Dendritic cell treated with granulocyte-macrophage colony-stimulating factor and Interleukin-4, amounts not matched to agents 40 ng/mL and 50 ng/mL, for 4 days (primary cell): ENCODE measurements at regions of chr20 and their contacts with region 1.

Region 1: GRCh38 chr20:53699958-53700305 is 106.3 kb upstream of the ZNF217 start:
- H3K4me3 Mint-ChIP-seq: no peak overlapping the region
- H3K27ac Mint-ChIP-seq: peak overlapping the region; percentile 91
- H3K4me1 Mint-ChIP-seq: peaks cover 52% of the 10 kb centered on the region
- H3K27me3 Mint-ChIP-seq: no peaks in the 10 kb centered on the region

Region 2: GRCh38 chr20:53582574-53583351 is 117.2 kb before region 1 on chr20:
- intact Hi-C with region 1: no loop called
- H3K4me3 Mint-ChIP-seq: peak overlapping the region; percentile 17
- H3K27ac Mint-ChIP-seq: peak overlapping the region; percentile 87
- H3K4me1 Mint-ChIP-seq: peaks cover 72% of the 10 kb centered on the region
- H3K27me3 Mint-ChIP-seq: no peaks in the 10 kb centered on the region

Region 3: GRCh38 chr20:53643031-53643832 is 56.7 kb before region 1 on chr20:
- intact Hi-C with region 1: no loop called
- H3K4me3 Mint-ChIP-seq: peak overlapping the region; percentile 62
- H3K27ac Mint-ChIP-seq: peak overlapping the region; percentile 91
- H3K4me1 Mint-ChIP-seq: peaks cover 49% of the 10 kb centered on the region
- H3K27me3 Mint-ChIP-seq: no peaks in the 10 kb centered on the region

Region 4: DNA sequence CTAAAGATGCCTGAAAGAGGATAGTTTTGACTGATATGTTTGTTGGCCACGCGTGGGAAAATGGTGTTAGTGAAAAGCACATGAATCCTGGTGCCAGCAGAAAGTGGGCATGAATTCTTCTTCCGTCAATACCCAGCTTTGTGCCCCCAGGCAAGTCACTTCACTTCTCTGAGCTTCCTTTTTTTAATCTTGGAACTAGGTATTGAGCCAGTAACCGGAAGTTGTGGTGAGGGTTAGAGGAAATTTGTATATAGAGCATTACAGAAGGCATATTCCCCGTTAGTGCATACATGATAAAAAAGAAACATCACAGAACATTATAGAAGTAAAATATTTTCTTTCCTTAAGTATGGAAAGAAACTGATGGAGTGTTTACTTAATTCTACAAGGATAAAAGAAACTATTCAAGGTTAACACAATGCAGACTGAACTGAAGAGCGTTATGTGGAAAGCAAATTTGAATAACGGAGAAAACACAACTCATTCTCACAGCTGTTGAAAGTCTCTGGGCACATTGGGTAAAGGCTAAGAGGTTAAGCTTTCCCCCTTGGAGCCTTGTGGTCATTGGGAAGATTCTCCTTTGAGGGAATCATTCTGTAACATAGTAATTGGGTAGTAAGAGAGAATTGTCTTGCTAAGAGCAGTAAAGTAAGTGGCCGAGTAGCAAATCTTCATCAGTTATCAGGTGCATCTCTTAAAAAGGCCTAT is 147.4 kb after region 1 on chr20:
- intact Hi-C with region 1: loop called (anchors 5 kb)
- H3K4me3 Mint-ChIP-seq: peak overlapping the region; percentile 7
- H3K27ac Mint-ChIP-seq: peak overlapping the region; percentile 89
- H3K4me1 Mint-ChIP-seq: peaks cover 63% of the 10 kb centered on the region
- H3K27me3 Mint-ChIP-seq: no peaks in the 10 kb centered on the region